ENCODE measurements at regions of chr16 and their contacts with region 1.

Region 1: DNA sequence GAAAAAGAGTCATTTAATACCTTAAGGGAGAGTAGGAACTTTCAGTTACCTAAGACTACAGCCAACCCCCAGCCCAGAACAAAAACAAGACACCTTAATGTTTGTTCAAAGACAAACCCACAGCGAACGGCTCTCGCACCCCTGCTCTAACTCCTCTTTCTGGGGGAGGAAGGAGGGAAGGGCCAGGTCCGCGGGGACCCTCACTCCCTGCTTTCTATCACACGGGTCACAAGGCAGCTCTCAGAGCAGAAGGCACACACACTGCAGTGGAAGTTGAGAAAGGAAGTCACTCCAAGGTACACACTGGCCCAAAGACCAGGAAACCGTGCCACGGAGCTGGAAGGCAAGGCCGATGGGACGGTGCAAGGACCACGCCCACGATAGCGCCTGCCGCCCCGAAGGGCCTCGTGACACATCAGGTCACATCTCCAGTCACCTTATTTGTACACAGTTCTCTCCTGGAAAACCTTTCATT is 10.0 kb downstream of the LITAFD start:
- DNase-seq: no peak
- H3K4me3 ChIP-seq: no peak overlapping the region
- H3K27ac ChIP-seq: no peak overlapping the region
- H3K4me1 ChIP-seq: peaks cover 10% of the 10 kb centered on the region
- H3K27me3 ChIP-seq: no peaks in the 10 kb centered on the region

Region 2: DNA sequence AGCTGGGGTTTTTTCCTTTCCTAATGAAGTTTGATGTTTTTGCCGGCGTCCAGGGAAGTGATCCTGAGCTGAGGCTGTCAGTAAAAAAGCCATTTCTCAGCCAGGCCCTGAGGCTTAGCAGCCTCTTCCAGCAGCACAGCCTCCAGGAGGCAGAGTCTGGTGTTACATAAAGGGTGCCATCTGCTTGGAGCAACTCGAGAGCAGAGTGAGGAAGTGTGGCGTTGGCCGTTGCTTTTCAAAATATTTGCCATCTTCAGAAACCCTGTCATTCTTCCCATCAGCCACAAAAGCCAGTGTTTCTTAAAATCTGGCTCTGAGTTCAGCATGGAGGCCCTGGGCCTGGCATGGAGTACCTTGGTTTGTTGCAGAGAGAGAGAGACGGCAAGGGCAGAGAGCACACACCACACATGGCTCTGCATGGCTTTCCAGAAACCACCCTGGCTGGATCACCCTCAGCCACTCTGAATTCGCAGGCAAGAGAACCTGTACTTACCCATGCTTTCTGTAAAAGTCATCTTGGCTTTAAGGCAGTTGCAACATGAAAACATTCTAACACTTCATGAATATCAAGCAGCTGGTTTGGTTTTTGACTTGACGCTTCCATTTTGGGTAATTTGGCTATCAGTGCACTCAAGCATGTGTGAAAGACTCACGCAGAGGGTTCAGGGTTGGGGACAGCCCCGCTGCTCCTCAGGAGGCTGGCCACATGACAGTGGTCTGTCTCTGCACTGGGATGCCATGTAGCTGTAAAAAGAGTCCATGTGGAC is 73.5 kb before region 1 on chr16:
- in situ Hi-C with region 1: no loop called
- DNase-seq: no peak
- H3K4me3 ChIP-seq: no peak overlapping the region
- H3K27ac ChIP-seq: no peak overlapping the region
- H3K4me1 ChIP-seq: 0 out of 2 replicates have a peak, but pooled peaks cover 7% of the 10 kb centered on the region
- H3K27me3 ChIP-seq: no peaks in the 10 kb centered on the region

Region 3: GRCh38 chr16:9008601-9009260 is 116.6 kb after region 1 on chr16:
- in situ Hi-C with region 1: loop called (anchors 10 kb)
- DNase-seq: peak; percentile 85
- H3K4me3 ChIP-seq: peak overlapping the region; percentile 63
- H3K27ac ChIP-seq: no peak overlapping the region
- H3K4me1 ChIP-seq: no peaks in the 10 kb centered on the region
- H3K27me3 ChIP-seq: no peaks in the 10 kb centered on the region; the same call in 1 of the 2 replicates

Measured in GM23248 (cell line).